ENCODE measurements at regions of chr5 and their contacts with region 1.

Region 1: DNA sequence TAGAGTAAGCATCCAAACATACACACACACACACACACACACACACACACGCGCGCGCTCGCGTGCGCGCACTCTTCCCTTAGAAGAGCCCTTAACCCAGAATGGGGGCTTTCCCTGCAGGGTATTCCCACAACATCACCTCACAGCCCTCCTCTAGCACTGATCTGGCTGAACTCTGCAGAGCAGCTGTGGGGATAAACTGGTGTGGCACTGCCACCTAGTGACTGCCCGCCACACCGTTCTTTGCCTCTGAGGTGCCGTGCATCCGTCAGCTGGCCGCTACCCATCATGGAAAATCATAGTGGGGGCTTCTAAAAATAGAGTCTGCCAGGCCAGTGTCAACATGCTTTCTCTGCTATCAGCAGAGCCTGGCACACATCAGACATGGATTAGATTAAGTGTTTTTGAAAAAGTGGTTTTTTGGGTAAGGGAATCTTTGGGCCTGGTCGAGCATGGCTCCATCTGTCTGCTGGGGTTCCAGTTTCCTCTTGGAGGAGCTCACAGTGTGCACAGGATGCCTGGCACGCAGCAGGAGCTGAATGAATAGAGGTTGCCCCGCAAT is 88.1 kb downstream of the KCNN2 start:
- DNase-seq: peak; percentile 29
- H3K4me3 ChIP-seq: no peak overlapping the region
- H3K27ac ChIP-seq: no peak overlapping the region
- H3K4me1 ChIP-seq: no peaks in the 10 kb centered on the region
- H3K27me3 ChIP-seq: no peaks in the 10 kb centered on the region
- CTCF ChIP-seq: peak; percentile 82 to 92

Region 2: DNA sequence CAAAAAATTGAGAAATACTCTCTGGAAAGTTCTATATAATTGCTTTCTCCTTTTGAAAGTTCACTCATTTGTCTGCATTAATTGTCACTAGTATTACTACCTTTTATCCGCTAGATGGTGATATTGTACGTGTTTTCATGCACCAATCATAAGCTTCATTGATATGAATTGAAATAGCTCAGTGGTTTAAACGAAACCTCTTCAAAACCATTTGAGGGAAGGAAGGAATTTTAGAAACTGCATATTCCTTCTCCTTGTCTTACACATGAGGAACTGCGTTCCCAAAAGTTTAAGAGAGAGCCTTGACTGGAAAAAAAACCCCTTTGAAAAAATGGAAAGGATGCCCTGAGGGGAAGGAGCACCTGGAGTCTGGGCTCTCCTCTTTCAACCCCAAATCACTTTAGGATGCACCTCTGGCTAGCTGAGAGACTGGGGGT is 837.9 kb before region 1 on chr5:
- CTCF ChIA-PET with region 1: interaction called, 17 read pairs
- dilution Hi-C with region 1: no loop called
- in situ Hi-C with region 1: no loop called
- intact Hi-C with region 1: loop called (anchors 1 kb)
- DNase-seq: peak; percentile 30
- H3K4me3 ChIP-seq: no peak overlapping the region
- H3K27ac ChIP-seq: no peak overlapping the region
- H3K4me1 ChIP-seq: peaks cover 7% of the 10 kb centered on the region
- H3K27me3 ChIP-seq: no peaks in the 10 kb centered on the region
- CTCF ChIP-seq: peak; percentile 58 to 62

Region 3: GRCh38 chr5:113806250-113806649 is 643.7 kb before region 1 on chr5:
- CTCF ChIA-PET with region 1: no interaction called
- dilution Hi-C with region 1: no loop called
- in situ Hi-C with region 1: no loop called
- intact Hi-C with region 1: loop called (anchors 10 kb)
- DNase-seq: peak; percentile 17
- H3K4me3 ChIP-seq: no peak overlapping the region
- H3K27ac ChIP-seq: no peak overlapping the region
- H3K4me1 ChIP-seq: peaks cover 7% of the 10 kb centered on the region
- H3K27me3 ChIP-seq: no peaks in the 10 kb centered on the region
- CTCF ChIP-seq: peak; percentile 32 to 39

Region 4: DNA sequence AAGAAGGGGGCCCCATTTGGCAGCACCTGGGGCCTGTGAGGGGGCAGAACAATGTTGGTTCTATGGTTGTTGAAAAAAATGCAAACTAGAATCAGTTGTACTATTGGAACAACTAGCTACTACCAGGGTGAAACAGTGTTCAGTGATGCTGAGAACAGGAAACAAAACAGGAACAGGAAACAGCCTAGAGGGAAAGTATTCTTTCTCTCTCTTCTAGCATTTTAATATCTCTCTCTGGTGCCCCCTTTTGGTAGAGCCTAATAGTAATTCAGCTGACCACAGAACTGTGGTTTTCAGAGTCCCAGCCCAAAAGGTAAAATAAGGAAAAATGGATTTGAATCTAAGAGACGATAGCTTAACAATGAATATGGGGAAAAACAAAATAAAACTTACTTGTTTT is 226.1 kb before region 1 on chr5:
- CTCF ChIA-PET with region 1: no interaction called
- dilution Hi-C with region 1: no loop called
- in situ Hi-C with region 1: no loop called
- intact Hi-C with region 1: loop called (anchors 5 kb)
- DNase-seq: peak; percentile 35
- H3K4me3 ChIP-seq: no peak overlapping the region
- H3K27ac ChIP-seq: no peak overlapping the region
- H3K4me1 ChIP-seq: no peaks in the 10 kb centered on the region
- H3K27me3 ChIP-seq: peaks cover 2% of the 10 kb centered on the region
- CTCF ChIP-seq: peak; percentile 67 to 77

Region 5: GRCh38 chr5:115069087-115069968 is 619.4 kb after region 1 on chr5:
- CTCF ChIA-PET with region 1: no interaction called
- dilution Hi-C with region 1: no loop called
- in situ Hi-C with region 1: no loop called
- intact Hi-C with region 1: loop called (anchors 1 kb)
- DNase-seq: peak; percentile 45
- H3K4me3 ChIP-seq: no peak overlapping the region
- H3K27ac ChIP-seq: no peak overlapping the region
- H3K4me1 ChIP-seq: no peaks in the 10 kb centered on the region
- H3K27me3 ChIP-seq: no peaks in the 10 kb centered on the region
- CTCF ChIP-seq: peak; percentile 73 to 86